CD8-positive, alpha-beta T cell (primary cell): ENCODE measurements at regions of chr2 and their contacts with region 1.

Region 1: GRCh38 chr2:190216829-190217228 is 102.8 kb downstream of the HIBCH start:
- DNase-seq: peak in 4 of 9 experiments; percentile 2 to 7 (median 4)
- ATAC-seq: no peak
- H3K4me3 ChIP-seq: no peak overlapping the region
- H3K4me3 Mint-ChIP-seq: no peak overlapping the region
- H3K27ac ChIP-seq: no peak overlapping the region
- H3K27ac Mint-ChIP-seq: no peak overlapping the region
- H3K4me1 ChIP-seq: peaks cover 4% of the 10 kb centered on the region
- H3K4me1 Mint-ChIP-seq: peaks cover 21% of the 10 kb centered on the region
- H3K27me3 ChIP-seq: no peaks in the 10 kb centered on the region
- H3K27me3 Mint-ChIP-seq: no peaks in the 10 kb centered on the region
- CTCF ChIP-seq: no peak

Region 2: GRCh38 chr2:190205657-190206056 is 11.2 kb before region 1 on chr2:
- CTCF ChIA-PET with region 1: no interaction called
- POLR2A ChIA-PET with region 1: no interaction called
- intact Hi-C with region 1: loop called in 1 of 2 experiments (anchors 2 kb)
- DNase-seq: no peak
- ATAC-seq: no peak
- H3K4me3 ChIP-seq: no peak overlapping the region
- H3K4me3 Mint-ChIP-seq: no peak overlapping the region
- H3K27ac ChIP-seq: no peak overlapping the region
- H3K27ac Mint-ChIP-seq: no peak overlapping the region
- H3K4me1 ChIP-seq: no peaks in the 10 kb centered on the region
- H3K4me1 Mint-ChIP-seq: no peaks in the 10 kb centered on the region
- H3K27me3 ChIP-seq: no peaks in the 10 kb centered on the region
- H3K27me3 Mint-ChIP-seq: no peaks in the 10 kb centered on the region
- CTCF ChIP-seq: no peak